ENCODE measurements at regions of chr21 and their contacts with region 1.

Region 1: GRCh38 chr21:32392880-32393676 is at the start of gene URB1:
- DNase-seq: peak; percentile 89 to 98 (median 94)
- ATAC-seq: peak; percentile 97
- H3K4me3 ChIP-seq: peak within 1 kb of the TSS; percentile 94 to 98
- H3K4me3 Mint-ChIP-seq: peak within 1 kb of the TSS; percentile 89
- H3K27ac ChIP-seq: peak within 1 kb of the TSS; percentile 65 to 83
- H3K27ac Mint-ChIP-seq: peak within 1 kb of the TSS; percentile 80
- H3K4me1 ChIP-seq: peaks cover 13% of the 10 kb centered on the region
- H3K4me1 Mint-ChIP-seq: peaks cover 50% of the 10 kb centered on the region
- H3K27me3 ChIP-seq: no peaks in the 10 kb centered on the region
- H3K27me3 Mint-ChIP-seq: peaks cover 7% of the 10 kb centered on the region
- CTCF ChIP-seq: no peak
- total RNA-seq, gene URB1: 5.4 to 5.9 TPM

Region 2: DNA sequence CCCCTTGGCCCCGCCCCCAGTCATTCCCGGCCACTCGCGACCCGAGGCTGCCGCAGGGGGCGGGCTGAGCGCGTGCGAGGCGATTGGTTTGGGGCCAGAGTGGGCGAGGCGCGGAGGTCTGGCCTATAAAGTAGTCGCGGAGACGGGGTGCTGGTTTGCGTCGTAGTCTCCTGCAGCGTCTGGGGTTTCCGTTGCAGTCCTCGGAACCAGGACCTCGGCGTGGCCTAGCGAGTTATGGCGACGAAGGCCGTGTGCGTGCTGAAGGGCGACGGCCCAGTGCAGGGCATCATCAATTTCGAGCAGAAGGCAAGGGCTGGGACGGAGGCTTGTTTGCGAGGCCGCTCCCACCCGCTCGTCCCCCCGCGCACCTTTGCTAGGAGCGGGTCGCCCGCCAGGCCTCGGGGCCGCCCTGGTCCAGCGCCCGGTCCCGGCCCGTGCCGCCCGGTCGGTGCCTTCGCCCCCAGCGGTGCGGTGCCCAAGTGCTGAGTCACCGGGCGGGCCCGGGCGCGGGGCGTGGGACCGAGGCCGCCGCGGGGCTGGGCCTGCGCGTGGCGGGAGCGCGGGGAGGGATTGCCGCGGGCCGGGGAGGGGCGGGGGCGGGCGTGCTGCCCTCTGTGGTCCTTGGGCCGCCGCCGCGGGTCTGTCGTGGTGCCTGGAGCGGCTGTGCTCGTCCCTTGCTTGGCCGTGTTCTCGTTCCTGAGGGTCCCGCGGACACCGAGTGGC is 733.4 kb before region 1 on chr21 and contains the start of gene SOD1:
- CTCF ChIA-PET with region 1: no interaction called
- POLR2A ChIA-PET with region 1: no interaction called
- intact Hi-C with region 1: loop called (anchors 2 to 10 kb)
- DNase-seq: peak; percentile 93 to 98 (median 96)
- ATAC-seq: peak; percentile 93
- H3K4me3 ChIP-seq: peak within 1 kb of the TSS; percentile 73 to 83
- H3K4me3 Mint-ChIP-seq: peak within 1 kb of the TSS; percentile 100
- H3K27ac ChIP-seq: peak within 1 kb of the TSS; percentile 77 to 87
- H3K27ac Mint-ChIP-seq: peak within 1 kb of the TSS; percentile 100
- H3K4me1 ChIP-seq: peaks cover 55% of the 10 kb centered on the region
- H3K4me1 Mint-ChIP-seq: peaks cover 72% of the 10 kb centered on the region
- H3K27me3 ChIP-seq: no peaks in the 10 kb centered on the region
- H3K27me3 Mint-ChIP-seq: no peaks in the 10 kb centered on the region
- CTCF ChIP-seq: no peak
- total RNA-seq, gene SOD1: 125 to 140 TPM

Region 3: GRCh38 chr21:32278518-32279376 is 114.3 kb before region 1 on chr21 and contains the start of gene MIS18A:
- CTCF ChIA-PET with region 1: no interaction called
- POLR2A ChIA-PET with region 1: interaction called, 3 read pairs
- intact Hi-C with region 1: loop called (anchors 1 to 2 kb)
- DNase-seq: peak; percentile 95 to 99 (median 97)
- ATAC-seq: peak; percentile 95
- H3K4me3 ChIP-seq: peak within 1 kb of the TSS; percentile 67 to 74
- H3K4me3 Mint-ChIP-seq: peak within 1 kb of the TSS; percentile 99
- H3K27ac ChIP-seq: peak within 1 kb of the TSS; percentile 33 to 69
- H3K27ac Mint-ChIP-seq: peak within 1 kb of the TSS; percentile 92
- H3K4me1 ChIP-seq: peaks cover 16% of the 10 kb centered on the region
- H3K4me1 Mint-ChIP-seq: peaks cover 31% of the 10 kb centered on the region
- H3K27me3 ChIP-seq: no peaks in the 10 kb centered on the region
- H3K27me3 Mint-ChIP-seq: no peaks in the 10 kb centered on the region
- CTCF ChIP-seq: no peak
- total RNA-seq, gene MIS18A: 3.7 to 5.1 TPM

Region 4: DNA sequence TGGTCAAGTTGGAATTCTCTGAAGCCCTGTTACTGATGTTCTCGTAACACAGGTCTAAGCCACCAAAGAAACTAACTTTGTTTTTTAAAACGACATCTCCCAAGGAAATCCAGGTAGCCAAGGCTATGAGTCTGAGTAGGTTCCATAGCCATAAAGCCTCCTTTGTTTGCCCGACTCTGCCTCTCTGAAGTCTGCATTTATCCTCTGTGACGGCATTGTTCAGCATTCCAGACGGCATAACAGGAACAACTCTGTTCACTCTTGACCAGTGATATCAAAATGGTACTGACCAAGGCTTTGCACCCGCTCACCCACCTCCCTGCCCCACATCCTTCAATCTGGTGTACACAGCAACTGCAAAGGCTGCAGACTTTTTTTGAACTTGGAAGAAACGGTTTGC is 15.1 kb before region 1 on chr21:
- CTCF ChIA-PET with region 1: no interaction called
- POLR2A ChIA-PET with region 1: no interaction called
- intact Hi-C with region 1: no loop called
- DNase-seq: no peak
- ATAC-seq: no peak
- H3K4me3 ChIP-seq: no peak overlapping the region
- H3K4me3 Mint-ChIP-seq: no peak overlapping the region
- H3K27ac ChIP-seq: no peak overlapping the region
- H3K27ac Mint-ChIP-seq: no peak overlapping the region
- H3K4me1 ChIP-seq: no peaks in the 10 kb centered on the region
- H3K4me1 Mint-ChIP-seq: no peaks in the 10 kb centered on the region
- H3K27me3 ChIP-seq: no peaks in the 10 kb centered on the region
- H3K27me3 Mint-ChIP-seq: no peaks in the 10 kb centered on the region
- CTCF ChIP-seq: no peak

Region 5: GRCh38 chr21:32569261-32570230 is 176.5 kb after region 1 on chr21:
- CTCF ChIA-PET with region 1: interaction called, 6 read pairs
- POLR2A ChIA-PET with region 1: interaction called, 14 read pairs
- intact Hi-C with region 1: loop called in 1 of 2 experiments (anchors 2 kb)
- DNase-seq: peak; percentile 67 to 93 (median 84)
- ATAC-seq: peak; percentile 88
- H3K4me3 ChIP-seq: peak overlapping the region; percentile 64 to 78
- H3K4me3 Mint-ChIP-seq: peak overlapping the region; percentile 90
- H3K27ac ChIP-seq: peak overlapping the region; percentile 46 to 63
- H3K27ac Mint-ChIP-seq: peak overlapping the region; percentile 91
- H3K4me1 ChIP-seq: peaks cover 18% of the 10 kb centered on the region
- H3K4me1 Mint-ChIP-seq: peaks cover 25% of the 10 kb centered on the region
- H3K27me3 ChIP-seq: no peaks in the 10 kb centered on the region
- H3K27me3 Mint-ChIP-seq: no peaks in the 10 kb centered on the region
- CTCF ChIP-seq: peak; percentile 97

Region 6: GRCh38 chr21:32727687-32728455 is 334.8 kb after region 1 on chr21 and contains the start of gene SYNJ1:
- CTCF ChIA-PET with region 1: no interaction called
- POLR2A ChIA-PET with region 1: no interaction called
- intact Hi-C with region 1: loop called (anchors 2 kb)
- DNase-seq: peak; percentile 86 to 96 (median 93)
- ATAC-seq: peak; percentile 86
- H3K4me3 ChIP-seq: peak within 1 kb of the TSS; percentile 86 to 99
- H3K4me3 Mint-ChIP-seq: peak within 1 kb of the TSS; percentile 94
- H3K27ac ChIP-seq: peak within 1 kb of the TSS; percentile 76 to 82
- H3K27ac Mint-ChIP-seq: peak within 1 kb of the TSS; percentile 93
- H3K4me1 ChIP-seq: peaks cover 45% of the 10 kb centered on the region
- H3K4me1 Mint-ChIP-seq: peaks cover 61% of the 10 kb centered on the region
- H3K27me3 ChIP-seq: no peaks in the 10 kb centered on the region
- H3K27me3 Mint-ChIP-seq: no peaks in the 10 kb centered on the region
- CTCF ChIP-seq: no peak
- total RNA-seq, gene SYNJ1: 10.5 to 10.7 TPM

Region 7: DNA sequence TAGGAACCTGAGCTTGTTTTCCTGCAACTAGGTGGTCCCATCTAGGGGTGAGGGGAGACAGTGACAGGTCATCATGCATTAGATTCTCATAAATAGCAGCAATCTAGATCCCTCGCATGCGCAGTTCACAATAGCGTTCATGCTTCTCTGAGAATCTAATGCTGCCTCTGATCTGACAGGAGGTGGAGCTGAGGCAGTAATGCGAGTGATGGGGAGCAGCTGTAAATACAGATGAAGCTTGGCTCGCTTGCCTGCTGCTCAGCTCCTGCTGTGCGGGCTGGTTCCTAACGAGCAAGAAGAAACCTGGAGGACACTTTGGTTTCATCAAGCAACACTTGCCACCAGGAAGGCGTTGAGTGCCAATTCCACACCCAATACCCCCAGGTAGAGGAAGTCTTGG is 537.6 kb after region 1 on chr21:
- CTCF ChIA-PET with region 1: no interaction called
- POLR2A ChIA-PET with region 1: no interaction called
- intact Hi-C with region 1: no loop called
- DNase-seq: no peak
- ATAC-seq: no peak
- H3K4me3 ChIP-seq: no peak overlapping the region
- H3K4me3 Mint-ChIP-seq: no peak overlapping the region
- H3K27ac ChIP-seq: no peak overlapping the region
- H3K27ac Mint-ChIP-seq: no peak overlapping the region
- H3K4me1 ChIP-seq: peaks cover 34% of the 10 kb centered on the region
- H3K4me1 Mint-ChIP-seq: peaks cover 36% of the 10 kb centered on the region
- H3K27me3 ChIP-seq: no peaks in the 10 kb centered on the region
- H3K27me3 Mint-ChIP-seq: no peaks in the 10 kb centered on the region
- CTCF ChIP-seq: no peak

Region 8: GRCh38 chr21:33542640-33543504 is 1149.8 kb after region 1 on chr21 and contains the start of gene SON:
- CTCF ChIA-PET with region 1: no interaction called
- POLR2A ChIA-PET with region 1: no interaction called
- intact Hi-C with region 1: loop called in 1 of 2 experiments (anchors 2 kb)
- DNase-seq: peak; percentile 93 to 99 (median 96)
- ATAC-seq: peak; percentile 89
- H3K4me3 ChIP-seq: peak within 1 kb of the TSS; percentile 87 to 88
- H3K4me3 Mint-ChIP-seq: peak within 1 kb of the TSS; percentile 96
- H3K27ac ChIP-seq: peak within 1 kb of the TSS; percentile 99
- H3K27ac Mint-ChIP-seq: peak within 1 kb of the TSS; percentile 99
- H3K4me1 ChIP-seq: peaks cover 44% of the 10 kb centered on the region
- H3K4me1 Mint-ChIP-seq: peaks cover 55% of the 10 kb centered on the region
- H3K27me3 ChIP-seq: no peaks in the 10 kb centered on the region
- H3K27me3 Mint-ChIP-seq: no peaks in the 10 kb centered on the region
- CTCF ChIP-seq: no peak
- total RNA-seq, gene SON: 418 to 422 TPM

Measured in CD8-positive, alpha-beta T cell (primary cell).